AG04449 (cell line): ENCODE measurements at regions of chr13 and their contacts with region 1.

Region 1: DNA sequence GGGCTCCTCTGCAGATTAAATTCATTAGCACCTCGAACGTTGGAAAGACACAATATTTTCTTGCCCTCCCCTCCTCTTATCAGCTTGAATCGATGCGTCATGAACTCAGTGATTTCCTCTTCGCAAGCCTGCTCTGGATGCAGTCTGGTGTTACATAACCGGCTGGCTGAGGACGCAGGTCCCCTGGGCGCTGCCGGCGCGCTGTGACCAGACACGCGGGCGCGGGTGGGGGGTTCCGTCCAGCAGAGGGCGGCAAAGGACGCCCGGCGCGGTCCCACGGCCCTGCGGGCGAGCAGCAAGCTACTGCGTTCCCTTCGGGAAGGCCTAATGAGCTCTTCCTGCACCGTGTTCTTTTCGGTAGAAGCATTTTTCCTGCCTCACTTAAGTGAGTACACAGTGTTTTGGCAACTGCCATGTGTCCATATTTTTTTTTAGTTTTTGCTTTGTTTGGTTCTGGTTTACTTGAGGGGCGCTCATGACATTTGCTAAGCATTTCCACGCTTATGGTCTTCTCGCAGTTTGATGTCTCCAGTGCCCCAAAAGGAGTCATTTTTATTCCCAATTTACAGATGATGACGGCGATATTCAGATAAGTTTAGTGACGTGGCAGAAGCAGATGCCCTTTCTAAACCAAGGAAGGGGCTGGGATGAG is 112.2 kb upstream of the MBNL2 start:
- DNase-seq: peak; percentile 52
- H3K4me3 ChIP-seq: peak overlapping the region; percentile 25; the same call in 1 of the 2 replicates
- CTCF ChIP-seq: peak; percentile 98

Region 2: GRCh38 chr13:97124916-97125809 is 15.2 kb after region 1 on chr13:
- CTCF ChIA-PET with region 1: interaction called, 45 read pairs
- POLR2A ChIA-PET with region 1: no interaction called
- DNase-seq: no peak
- H3K4me3 ChIP-seq: no peak overlapping the region
- CTCF ChIP-seq: no peak

Region 3: DNA sequence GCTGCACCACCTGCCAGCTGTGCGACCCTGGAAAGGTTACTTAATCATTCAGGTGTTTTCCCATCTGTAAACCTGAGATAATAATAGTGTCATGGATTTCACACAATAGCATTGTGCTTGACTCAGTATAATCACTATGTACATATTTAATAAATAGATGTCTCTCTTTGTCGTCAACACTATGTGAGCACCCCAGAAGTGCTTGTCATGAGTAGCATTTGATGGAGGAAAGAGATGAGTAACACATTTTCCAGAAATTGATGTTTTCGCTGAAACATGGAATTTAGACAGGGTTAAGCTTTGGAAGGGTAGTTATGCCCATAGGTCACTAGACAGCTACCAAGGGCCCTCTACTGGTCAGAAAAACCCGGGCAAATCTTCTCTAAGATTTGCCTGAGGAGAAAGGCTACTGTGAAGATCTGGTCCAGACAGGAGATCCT is 102.7 kb after region 1 on chr13:
- CTCF ChIA-PET with region 1: interaction called, 161 read pairs
- POLR2A ChIA-PET with region 1: no interaction called
- DNase-seq: no peak
- H3K4me3 ChIP-seq: no peak overlapping the region
- CTCF ChIP-seq: peak; percentile 59

Region 4: GRCh38 chr13:97231118-97231828 is 121.3 kb after region 1 on chr13:
- CTCF ChIA-PET with region 1: interaction called, 22 read pairs
- POLR2A ChIA-PET with region 1: no interaction called
- DNase-seq: no peak
- H3K4me3 ChIP-seq: no peak overlapping the region; the same call in 1 of the 2 replicates
- CTCF ChIP-seq: no peak

Region 5: DNA sequence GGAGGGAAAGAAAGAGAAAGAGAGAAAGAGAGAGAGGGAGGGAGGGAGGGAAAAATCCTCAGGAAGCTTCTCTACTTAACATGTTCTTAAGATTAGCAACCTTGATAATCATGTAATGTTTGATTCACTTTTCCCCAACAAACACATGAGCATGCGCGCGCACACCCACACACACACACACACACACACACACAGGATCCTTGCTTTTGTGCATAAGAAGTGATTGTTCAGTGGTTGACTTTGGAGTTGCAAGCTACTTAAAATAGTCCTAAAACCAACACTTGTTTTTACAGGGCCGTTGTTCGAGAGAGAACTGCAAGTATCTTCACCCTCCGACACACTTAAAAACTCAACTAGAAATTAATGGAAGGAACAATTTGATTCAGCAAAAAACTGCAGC is 224.0 kb after region 1 on chr13:
- CTCF ChIA-PET with region 1: interaction called, 133 read pairs
- POLR2A ChIA-PET with region 1: no interaction called
- DNase-seq: no peak
- H3K4me3 ChIP-seq: no peak overlapping the region
- CTCF ChIP-seq: no peak

Region 6: DNA sequence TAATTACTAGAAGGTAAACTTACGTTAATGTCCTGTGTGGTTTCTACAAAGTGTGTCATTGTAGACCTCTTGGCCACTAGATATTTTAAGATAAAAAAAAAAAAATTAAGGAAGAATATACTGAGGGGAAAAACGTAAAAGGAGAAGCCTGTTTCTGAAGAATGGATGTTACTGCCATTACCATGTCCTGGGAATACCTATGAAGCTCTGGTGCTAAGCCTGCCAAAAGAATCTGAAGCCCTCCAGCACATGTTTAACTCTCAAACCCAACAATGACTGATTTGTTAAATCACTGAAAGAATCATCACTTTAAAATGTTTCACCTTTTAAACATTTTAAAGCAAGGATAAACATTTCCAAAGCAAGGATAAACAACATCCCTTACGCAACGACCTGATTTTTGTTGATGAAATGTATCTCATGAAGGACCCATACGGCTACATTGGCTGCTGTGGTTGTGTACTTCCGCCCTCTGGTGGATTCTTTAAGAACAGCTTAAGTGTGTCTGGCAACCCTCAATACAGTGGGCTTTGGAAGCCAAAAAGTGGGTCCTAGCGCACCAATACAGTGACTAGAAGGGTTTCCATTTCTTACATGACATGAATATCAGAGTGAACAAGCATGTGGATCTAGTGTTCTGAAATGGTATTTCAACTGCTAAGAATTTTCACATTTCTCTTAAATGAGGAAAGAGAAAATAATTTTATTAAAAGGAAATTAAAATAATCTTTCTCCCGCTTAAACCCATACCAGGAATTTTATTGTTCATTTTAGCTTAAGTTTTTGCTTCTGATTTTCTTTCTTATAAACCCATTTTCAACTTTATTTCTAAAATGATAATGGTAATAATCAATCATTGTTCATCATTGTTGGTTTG is 249.5 kb after region 1 on chr13:
- CTCF ChIA-PET with region 1: interaction called, 248 read pairs
- POLR2A ChIA-PET with region 1: no interaction called
- DNase-seq: no peak
- H3K4me3 ChIP-seq: no peak overlapping the region
- CTCF ChIP-seq: peak; percentile 73